HepG2 (cell line): ENCODE measurements at regions of chr3 and their contacts with region 1.

Region 1: GRCh38 chr3:49539659-49540560 is 14.4 kb upstream of the BSN start:
- DNase-seq: peak; percentile 85
- ATAC-seq: peak; percentile 94
- H3K4me3 ChIP-seq: peak overlapping the region; percentile 55 to 78 (median 59)
- H3K27ac ChIP-seq: peak overlapping the region; percentile 70
- H3K4me1 ChIP-seq: peaks cover 42% of the 10 kb centered on the region
- H3K27me3 ChIP-seq: 0 out of 5 replicates have a peak, but pooled peaks cover 0 to 3% of the 10 kb centered on the region in 2 experiments
- CTCF ChIP-seq: peak; percentile 96
- EP300 ChIP-seq: no peak
- POLR2A ChIP-seq: peak; percentile 81 to 84
- RAD21 ChIP-seq: peak; percentile 98

Region 2: GRCh38 chr3:49454458-49454857 is 85.5 kb before region 1 on chr3:
- CTCF ChIA-PET with region 1: no interaction called
- POLR2A ChIA-PET with region 1: no interaction called
- in situ Hi-C with region 1: no loop called
- intact Hi-C with region 1: loop called (anchors 1 kb)
- DNase-seq: peak; percentile 66
- ATAC-seq: peak; percentile 91
- H3K4me3 ChIP-seq: no peak overlapping the region
- H3K27ac ChIP-seq: no peak overlapping the region
- H3K4me1 ChIP-seq: peaks cover 46% of the 10 kb centered on the region
- H3K27me3 ChIP-seq: no peaks in the 10 kb centered on the region
- CTCF ChIP-seq: peak; percentile 90
- EP300 ChIP-seq: no peak
- POLR2A ChIP-seq: no peak
- RAD21 ChIP-seq: peak; percentile 63

Region 3: DNA sequence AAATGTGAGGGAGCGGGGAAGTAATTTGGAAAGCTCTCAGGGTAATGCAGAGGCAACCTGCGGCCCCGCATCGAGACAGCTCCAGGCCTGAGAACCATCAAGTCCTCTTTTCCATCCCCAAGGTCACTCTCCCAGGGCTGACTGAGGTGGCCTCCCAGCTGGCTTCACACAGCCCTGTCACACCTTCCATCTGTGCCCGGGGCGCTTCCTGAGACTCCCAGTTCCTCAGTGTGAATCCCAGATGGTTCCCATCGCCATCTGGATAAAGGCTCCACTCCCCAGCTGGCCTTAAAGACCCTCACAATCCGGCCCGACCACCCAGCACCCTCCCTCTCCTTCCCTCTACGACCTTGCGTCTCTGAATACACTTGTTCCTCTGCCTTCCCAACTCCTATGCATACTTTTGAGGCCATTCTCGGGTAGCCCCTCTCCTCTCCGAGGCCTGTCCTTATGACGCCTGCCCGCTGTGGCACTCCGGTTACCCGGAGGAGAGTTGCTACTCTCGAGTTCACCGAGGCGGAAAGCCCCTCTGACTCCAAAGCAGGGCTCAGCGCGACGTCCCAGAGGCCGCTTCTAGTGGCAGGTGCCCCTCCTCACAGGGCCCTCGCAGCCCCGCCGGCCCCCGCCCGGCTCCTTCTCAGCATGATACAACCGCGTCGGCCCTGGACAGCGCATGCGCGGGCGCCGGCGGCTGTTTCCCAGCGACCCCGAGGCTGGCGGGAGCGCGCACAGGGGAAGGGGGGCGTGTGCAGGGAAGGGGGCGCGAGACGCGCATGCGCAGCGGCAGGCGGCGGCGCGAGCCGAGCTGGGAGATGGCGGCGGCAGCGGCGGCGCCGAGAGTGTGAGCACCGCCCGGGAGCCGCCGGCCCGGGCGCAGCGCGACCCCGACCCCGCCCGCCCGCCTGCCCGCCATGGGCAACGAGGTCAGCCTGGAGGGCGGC is 14.1 kb after region 1 on chr3 and contains the start of gene BSN:
- CTCF ChIA-PET with region 1: interaction called, 3 read pairs
- POLR2A ChIA-PET with region 1: interaction called, 53 read pairs
- in situ Hi-C with region 1: no loop called
- intact Hi-C with region 1: no loop called
- DNase-seq: peak; percentile 80
- ATAC-seq: peak; percentile 83
- H3K4me3 ChIP-seq: peak within 1 kb of the TSS; percentile 74 to 87 (median 75)
- H3K27ac ChIP-seq: peak within 1 kb of the TSS; percentile 58
- H3K4me1 ChIP-seq: peaks cover 48% of the 10 kb centered on the region
- H3K27me3 ChIP-seq: peaks cover 0 to 3% of the 10 kb centered on the region in 2 experiments; a peak in 1 of 5 replicates
- CTCF ChIP-seq: no peak
- EP300 ChIP-seq: no peak
- POLR2A ChIP-seq: peak in 1 of 2 experiments; percentile 64; a peak in 2 of 4 replicates
- RAD21 ChIP-seq: no peak
- total RNA-seq, gene BSN: 0.70 and 0.86 TPM in 2 replicates

Region 4: GRCh38 chr3:49668414-49668797 is 128.5 kb after region 1 on chr3:
- CTCF ChIA-PET with region 1: interaction called, 31 read pairs
- POLR2A ChIA-PET with region 1: interaction called, 98 read pairs
- in situ Hi-C with region 1: loop called (anchors 5 kb)
- intact Hi-C with region 1: loop called (anchors 1 kb)
- DNase-seq: peak; percentile 76
- ATAC-seq: peak; percentile 56
- H3K4me3 ChIP-seq: no peak overlapping the region
- H3K27ac ChIP-seq: peak overlapping the region; percentile 80
- H3K4me1 ChIP-seq: peaks cover 92% of the 10 kb centered on the region
- H3K27me3 ChIP-seq: no peaks in the 10 kb centered on the region
- CTCF ChIP-seq: peak; percentile 82
- EP300 ChIP-seq: peak in 1 of 2 experiments; percentile 74; a peak in 2 of 4 replicates
- POLR2A ChIP-seq: no peak
- RAD21 ChIP-seq: peak; percentile 42; the same call in 1 of the 2 replicates

Region 5: DNA sequence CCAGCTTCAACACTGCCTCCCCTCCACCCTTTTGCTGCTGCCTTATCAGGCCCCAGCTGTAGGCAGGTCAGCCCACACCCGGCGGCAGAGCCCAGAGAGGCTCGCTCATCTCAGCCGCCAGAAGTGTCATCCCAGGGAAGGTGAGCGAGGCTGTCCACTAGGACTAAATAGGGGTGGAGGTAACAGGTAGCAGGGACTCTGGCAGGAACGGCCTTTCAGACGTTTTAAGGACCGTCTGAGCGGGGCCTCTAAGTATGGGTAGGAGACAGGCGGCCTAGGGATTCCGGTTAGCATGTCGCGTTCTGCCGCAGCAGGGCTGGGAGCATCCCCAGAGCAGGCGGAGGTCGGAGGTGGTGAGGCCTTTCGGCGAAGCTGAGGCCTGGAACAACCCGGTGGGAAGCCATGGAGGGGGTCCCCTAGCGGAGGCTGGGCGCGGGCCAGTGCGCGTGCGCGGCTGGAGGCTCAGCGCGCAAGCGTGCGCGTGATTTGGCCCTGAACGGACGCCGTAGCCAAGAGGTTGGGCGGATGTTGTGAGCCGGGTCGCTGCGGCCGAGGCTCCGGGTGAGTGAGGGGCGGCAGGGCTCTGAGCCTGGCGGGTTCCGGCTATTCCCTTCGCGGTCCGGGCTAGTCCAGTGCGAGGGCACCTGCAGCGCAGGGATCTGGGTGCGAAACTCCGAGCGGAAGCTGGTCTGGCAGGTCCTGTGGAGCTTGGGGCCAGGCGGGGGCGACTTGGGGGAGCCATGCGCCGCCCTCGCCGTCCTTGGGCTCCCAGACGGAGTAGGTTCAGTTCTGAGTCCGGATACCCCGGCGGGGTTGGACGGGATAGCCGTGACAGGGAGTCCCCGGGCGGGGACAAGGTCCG is 149.4 kb after region 1 on chr3 and contains the starts of genes MST1 and RNF123:
- CTCF ChIA-PET with region 1: no interaction called
- POLR2A ChIA-PET with region 1: interaction called, 18 read pairs
- in situ Hi-C with region 1: no loop called
- intact Hi-C with region 1: no loop called
- DNase-seq: peak; percentile 86
- ATAC-seq: peak; percentile 60
- H3K4me3 ChIP-seq: peak within 1 kb of the TSS; percentile 75 to 96 (median 89)
- H3K27ac ChIP-seq: peak within 1 kb of the TSS; percentile 96
- H3K4me1 ChIP-seq: peaks cover 47% of the 10 kb centered on the region
- H3K27me3 ChIP-seq: no peaks in the 10 kb centered on the region; a peak in 1 of 5 replicates
- CTCF ChIP-seq: peak; percentile 71
- EP300 ChIP-seq: no peak
- POLR2A ChIP-seq: peak; percentile 59 to 72; a peak in 3 of 4 replicates
- RAD21 ChIP-seq: 0 out of 2 replicates have a peak, but pooled peaks have one; percentile 8
- total RNA-seq, gene MST1: 26.7 and 189 TPM in 2 replicates
- total RNA-seq, gene RNF123: 16.1 and 29.9 TPM in 2 replicates